Head of caudate nucleus (tissue), 42 donors: ENCODE measurements at regions of chr14 and their contacts with region 1.

Region 1: DNA sequence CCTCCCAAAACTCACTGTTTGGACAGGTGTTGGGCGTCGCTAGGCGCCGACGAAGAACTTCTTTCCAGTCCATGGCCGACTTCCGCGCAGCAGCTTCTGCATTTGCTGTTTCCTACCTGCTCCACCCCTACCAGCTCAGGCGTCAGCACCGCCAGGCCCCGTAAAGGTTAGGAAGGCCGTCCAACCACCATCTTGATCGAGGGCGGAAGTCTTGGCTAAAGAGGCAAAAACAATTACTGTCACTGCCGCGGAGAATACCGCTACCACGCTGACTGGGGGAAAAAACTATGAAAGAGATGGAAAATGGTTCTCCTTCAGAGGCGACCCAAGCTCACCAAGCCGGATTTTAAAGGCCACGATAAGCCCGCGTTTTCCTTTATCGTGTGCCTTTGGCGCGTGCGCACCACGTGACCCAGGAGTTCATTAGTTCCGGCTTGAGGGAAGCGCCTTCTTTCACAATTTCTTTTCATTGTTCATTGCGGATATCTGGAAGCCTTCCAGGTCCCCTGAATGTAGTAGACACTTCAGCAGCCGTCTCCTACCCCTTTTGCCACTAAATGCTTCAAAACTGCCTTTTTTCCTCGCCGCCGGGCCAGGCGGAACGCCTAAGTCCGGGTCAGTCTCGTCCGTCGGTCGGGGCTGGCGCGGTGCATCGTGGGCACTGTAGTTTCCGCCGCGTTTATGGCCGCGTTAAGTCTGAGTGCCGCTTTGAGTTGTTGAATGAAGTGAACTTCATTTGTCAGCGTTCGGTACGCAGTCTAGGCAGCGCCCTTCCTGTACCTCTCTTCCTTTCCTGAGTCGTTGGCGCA is at the starts of genes PPP2R3C and PRORP:
- DNase-seq: peak; percentile 87 to 97 (median 92)

Region 2: DNA sequence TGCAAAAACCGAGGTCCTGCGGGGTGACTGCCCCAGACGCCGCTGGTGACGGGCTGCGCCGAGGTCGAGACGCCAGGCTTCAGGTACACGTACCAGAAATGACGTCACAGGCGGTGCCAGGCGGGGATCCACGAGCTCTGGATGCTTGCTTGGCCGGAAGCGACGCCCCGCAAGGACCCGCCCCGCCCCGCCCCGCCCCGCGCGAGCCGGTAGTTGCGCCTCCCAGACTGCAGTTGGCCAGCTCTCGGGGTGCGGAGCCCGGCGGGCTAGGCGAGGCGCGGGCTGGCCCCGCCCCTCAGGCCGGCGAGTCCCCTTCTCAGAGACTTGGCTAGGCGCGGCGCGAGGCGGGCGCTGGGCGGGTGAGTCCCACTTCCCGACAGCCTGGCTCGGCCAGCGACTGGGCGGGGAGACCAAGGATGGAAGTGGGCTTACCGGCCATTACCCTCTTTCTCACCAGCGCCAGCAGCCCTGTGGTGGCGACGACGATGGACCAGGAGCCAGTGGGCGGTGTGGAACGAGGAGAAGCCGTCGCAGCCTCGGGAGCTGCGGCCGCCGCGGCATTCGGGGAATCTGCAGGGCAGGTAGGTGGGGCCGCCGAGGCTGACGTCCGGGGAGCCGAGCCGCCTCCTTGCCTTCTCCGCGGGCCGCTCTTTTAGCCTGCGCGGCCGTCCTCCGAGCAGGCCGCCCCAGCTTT is 75.9 kb before region 1 on chr14 and contains the start of gene FAM177A1:
- intact Hi-C with region 1: loop called (anchors 5 kb)
- DNase-seq: peak; percentile 96 to 99 (median 98)

Region 3: GRCh38 chr14:35088514-35088913 is 33.6 kb before region 1 on chr14:
- intact Hi-C with region 1: no loop called
- DNase-seq: no peak

Region 4: DNA sequence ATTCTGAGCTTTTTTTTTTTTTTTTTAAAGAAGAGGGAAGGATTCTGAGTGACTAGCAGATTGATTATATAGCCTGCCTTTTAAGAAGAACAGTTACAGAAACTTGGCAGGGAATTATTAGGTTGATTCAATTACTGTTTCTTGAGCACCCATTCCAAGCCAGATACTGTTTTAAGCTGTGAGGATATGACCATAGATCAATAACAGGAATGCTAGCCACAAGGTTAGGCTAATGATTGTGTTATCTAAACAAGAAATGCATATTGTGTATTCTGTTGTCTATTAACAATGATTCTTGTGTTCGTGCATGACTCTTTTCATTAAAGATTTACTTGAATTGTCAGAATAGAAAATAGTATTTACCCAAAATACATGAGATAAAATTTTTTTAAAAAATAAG is 67.3 kb after region 1 on chr14:
- intact Hi-C with region 1: no loop called
- DNase-seq: no peak